ENCODE measurements at regions of chr11 and their contacts with region 1.

Region 1: DNA sequence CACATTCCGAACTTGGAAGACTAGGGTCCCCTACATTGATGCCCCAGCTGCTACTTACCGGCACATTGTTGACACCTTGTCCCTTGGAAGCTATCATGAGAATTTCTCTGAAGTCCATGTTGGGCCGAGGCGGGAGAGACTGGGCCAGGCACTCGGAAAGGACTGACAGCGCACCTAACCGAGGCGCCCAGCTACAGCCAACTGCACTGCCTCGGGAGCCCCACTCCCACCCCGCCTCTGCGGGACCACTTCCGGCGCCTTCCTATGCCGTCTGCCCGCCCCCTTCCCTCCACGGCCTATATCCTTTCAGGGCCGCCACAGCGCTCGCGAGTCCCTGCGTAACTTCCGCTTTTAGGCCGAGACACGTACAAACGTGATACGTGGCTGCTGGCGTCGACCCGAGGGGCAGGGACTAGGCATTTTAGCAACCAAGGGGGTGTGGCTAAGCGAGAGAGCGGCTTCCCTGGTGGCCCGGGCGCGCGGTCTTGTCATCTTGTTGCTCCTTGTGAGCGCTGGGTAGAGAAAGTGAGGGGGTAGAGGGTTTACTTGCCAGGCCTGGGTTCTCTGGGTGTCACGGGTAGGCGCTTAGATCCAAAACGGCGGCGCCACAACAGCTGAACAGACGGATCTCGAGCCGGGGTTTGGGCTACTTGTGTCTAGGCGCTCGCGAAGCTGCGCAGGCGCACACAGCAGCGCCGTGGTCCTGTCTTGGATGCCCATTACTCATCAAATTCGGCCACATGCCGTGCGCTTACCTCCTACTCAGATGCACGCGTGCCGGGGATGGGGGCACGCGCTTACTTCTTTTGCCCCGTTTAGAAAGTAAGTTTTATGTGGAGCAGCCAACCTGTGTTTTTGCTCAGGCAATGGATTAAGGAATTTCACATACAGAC is at the start of gene SPTY2D1:
- DNase-seq: peak; percentile 100
- H3K4me3 ChIP-seq: peak within 1 kb of the TSS; percentile 72 to 83
- H3K27ac ChIP-seq: peak within 1 kb of the TSS; percentile 89 to 91
- H3K4me1 ChIP-seq: no peaks in the 10 kb centered on the region
- H3K27me3 ChIP-seq: no peaks in the 10 kb centered on the region
- CTCF ChIP-seq: peak in 3 of 4 experiments; percentile 11 to 50 (median 22)
- POLR2A ChIP-seq: peak; percentile 93
- total RNA-seq, gene SPTY2D1: 18.0 to 19.3 TPM

Region 2: DNA sequence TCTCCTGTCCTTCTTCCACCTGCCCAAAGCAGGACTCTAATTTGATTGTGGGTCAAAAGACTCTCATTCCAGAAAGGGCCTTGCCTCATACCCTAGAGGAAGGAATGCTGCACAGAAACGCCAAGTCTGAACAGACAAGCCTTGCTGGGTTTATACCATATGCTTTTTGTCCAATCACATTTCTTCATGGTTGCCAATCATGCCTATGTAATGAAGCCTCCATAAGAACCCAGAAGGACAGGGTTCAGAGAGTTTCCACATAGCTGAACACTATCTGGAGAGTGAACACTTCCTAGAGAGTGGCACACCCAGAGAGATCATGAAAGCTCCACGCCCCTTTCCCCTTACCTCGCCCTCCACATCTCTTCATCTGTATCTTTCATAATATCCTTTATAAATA is 381.2 kb before region 1 on chr11:
- intact Hi-C with region 1: no loop called
- DNase-seq: no peak
- H3K4me3 ChIP-seq: no peak overlapping the region
- H3K27ac ChIP-seq: no peak overlapping the region
- H3K4me1 ChIP-seq: no peaks in the 10 kb centered on the region
- H3K27me3 ChIP-seq: no peaks in the 10 kb centered on the region
- CTCF ChIP-seq: no peak
- POLR2A ChIP-seq: no peak

Region 3: DNA sequence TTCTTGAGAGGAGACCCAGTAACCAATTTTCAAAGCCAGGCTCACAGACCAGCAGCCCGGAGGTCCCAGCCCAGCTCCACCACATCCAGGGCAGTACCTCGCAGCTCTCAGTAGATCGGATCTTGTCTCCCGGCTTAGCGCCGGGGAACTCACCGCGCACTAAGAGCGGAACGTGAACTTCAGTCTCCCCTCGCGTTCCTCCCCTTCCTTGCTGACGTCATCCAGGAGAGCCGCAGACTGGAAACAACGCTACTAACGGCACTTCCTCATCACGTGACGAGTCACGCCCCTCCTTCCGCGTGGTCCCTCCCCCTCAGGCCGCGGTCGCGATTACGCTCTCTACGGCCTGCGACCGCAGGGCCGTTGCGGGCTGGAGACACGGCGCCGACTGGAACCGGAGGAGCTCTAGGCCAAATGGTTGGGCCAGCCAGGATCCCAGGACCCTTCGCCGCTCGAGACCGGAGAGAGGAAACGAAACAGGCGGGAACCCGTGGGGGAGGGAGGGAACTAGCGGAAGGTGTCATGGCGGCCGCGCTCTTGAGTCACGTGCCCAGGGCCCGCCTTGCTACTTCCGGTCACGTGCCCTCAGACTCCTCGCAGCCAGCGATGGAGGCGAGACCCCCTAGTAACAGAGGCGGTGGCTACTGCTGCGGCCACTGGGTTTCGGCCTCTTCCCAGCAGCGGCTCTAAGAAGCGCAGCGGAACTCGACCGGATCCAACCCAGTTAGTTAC is 312.2 kb before region 1 on chr11 and contains the starts of genes GTF2H1 and HPS5:
- intact Hi-C with region 1: loop called (anchors 2 kb)
- DNase-seq: peak; percentile 97
- H3K4me3 ChIP-seq: peak within 1 kb of the TSS; percentile 73 to 86
- H3K27ac ChIP-seq: peak within 1 kb of the TSS; percentile 98
- H3K4me1 ChIP-seq: peaks cover 11% of the 10 kb centered on the region
- H3K27me3 ChIP-seq: no peaks in the 10 kb centered on the region
- CTCF ChIP-seq: peak in 2 of 4 experiments; percentile 5 to 9
- POLR2A ChIP-seq: peak; percentile 93
- total RNA-seq, gene GTF2H1: 34.8 to 89.0 TPM
- total RNA-seq, gene HPS5: 20.5 to 56.0 TPM

Region 4: GRCh38 chr11:18698341-18699268 is 64.2 kb after region 1 on chr11 and contains the start of gene TMEM86A:
- intact Hi-C with region 1: loop called (anchors 5 kb)
- DNase-seq: peak; percentile 89
- H3K4me3 ChIP-seq: peak within 1 kb of the TSS; percentile 90 to 97
- H3K27ac ChIP-seq: peak within 1 kb of the TSS; percentile 75 to 79
- H3K4me1 ChIP-seq: no peaks in the 10 kb centered on the region
- H3K27me3 ChIP-seq: no peaks in the 10 kb centered on the region
- CTCF ChIP-seq: no peak
- POLR2A ChIP-seq: peak; percentile 68
- total RNA-seq, gene TMEM86A: 3.2 to 6.5 TPM

Region 5: DNA sequence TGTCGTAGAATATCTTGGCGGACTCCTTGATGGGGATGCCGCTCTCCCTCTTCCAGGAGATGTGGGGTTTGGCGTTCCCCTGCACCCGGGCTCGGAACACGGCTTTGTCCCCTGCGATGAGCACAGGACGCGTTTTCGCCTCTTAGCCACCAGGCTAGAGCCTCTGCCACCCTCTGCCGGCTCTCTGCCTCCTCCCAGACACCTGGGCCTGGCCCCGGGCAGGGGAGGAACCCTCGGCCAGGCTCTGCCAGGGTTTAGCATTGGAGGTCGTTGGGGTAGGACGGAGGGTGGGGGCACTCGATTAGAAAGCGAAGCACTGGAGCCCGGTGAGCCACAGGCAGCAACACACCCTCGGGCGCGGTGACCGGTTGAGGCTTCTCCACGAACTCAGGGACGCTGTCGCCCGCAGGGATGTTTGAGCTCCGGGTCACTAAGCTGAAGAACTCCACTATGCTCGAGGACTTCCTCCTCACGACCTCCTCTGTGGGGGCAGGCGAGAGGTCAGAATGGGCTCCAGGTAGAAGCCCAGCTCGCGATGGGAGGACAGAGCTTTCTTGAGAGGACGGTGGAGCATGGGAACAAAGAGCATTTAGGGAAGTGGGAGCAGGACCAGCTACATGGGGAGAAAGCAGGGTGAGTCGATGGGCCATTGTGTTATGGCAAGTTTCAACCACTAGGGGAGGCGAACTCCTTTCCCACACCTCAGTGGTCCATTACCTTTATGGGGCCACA is 87.3 kb after region 1 on chr11:
- intact Hi-C with region 1: loop called (anchors 5 kb)
- DNase-seq: peak; percentile 28
- H3K4me3 ChIP-seq: peak overlapping the region; percentile 25 to 38
- H3K27ac ChIP-seq: peak overlapping the region; percentile 23 to 32
- H3K4me1 ChIP-seq: no peaks in the 10 kb centered on the region
- H3K27me3 ChIP-seq: no peaks in the 10 kb centered on the region
- CTCF ChIP-seq: peak; percentile 41 to 57 (median 50)
- POLR2A ChIP-seq: no peak

Measured in prostate gland (tissue), 2 donors.